ENCODE measurements at regions of chr6 and their contacts with region 1.

Region 1: GRCh38 chr6:83948851-83949250 is 84.7 kb upstream of the MRAP2 start:
- DNase-seq: no peak
- ATAC-seq: no peak
- H3K4me3 ChIP-seq: no peak overlapping the region
- H3K4me1 ChIP-seq: no peaks in the 10 kb centered on the region
- CTCF ChIP-seq: no peak

Region 2: DNA sequence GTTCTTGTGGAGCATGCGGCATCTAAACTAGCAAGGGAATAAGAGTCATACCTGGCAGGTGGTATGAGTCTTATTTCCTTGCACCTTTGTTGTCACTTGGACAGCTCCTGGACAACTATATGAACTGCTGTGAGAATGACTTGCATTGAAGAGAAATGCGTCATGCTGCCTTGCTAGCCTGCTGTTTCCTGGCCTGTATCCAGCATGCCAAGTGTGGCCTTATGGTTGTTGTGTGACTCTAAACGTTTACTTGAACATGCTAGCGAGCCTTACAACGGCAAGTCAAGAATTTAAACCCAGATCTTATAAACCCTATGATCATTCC is 188.2 kb after region 1 on chr6:
- intact Hi-C with region 1: no loop called
- DNase-seq: no peak
- ATAC-seq: no peak
- H3K4me3 ChIP-seq: no peak overlapping the region
- H3K4me1 ChIP-seq: no peaks in the 10 kb centered on the region
- CTCF ChIP-seq: no peak

Region 3: GRCh38 chr6:85348643-85349042 is 1399.8 kb after region 1 on chr6:
- intact Hi-C with region 1: loop called in 1 of 2 experiments (anchors 10 kb)
- DNase-seq: no peak
- ATAC-seq: no peak
- H3K4me3 ChIP-seq: no peak overlapping the region
- H3K4me1 ChIP-seq: no peaks in the 10 kb centered on the region
- CTCF ChIP-seq: no peak

Measured in mucosa of descending colon (tissue), 3 donors.